ENCODE measurements at regions of chr18 and their contacts with region 1.

Region 1: GRCh38 chr18:47748847-47749599 is 181.4 kb downstream of the SMAD2 start:
- DNase-seq: peak; percentile 81
- H3K4me3 Mint-ChIP-seq: no peak overlapping the region
- H3K27ac Mint-ChIP-seq: no peak overlapping the region
- H3K4me1 Mint-ChIP-seq: peaks cover 3% of the 10 kb centered on the region
- H3K27me3 Mint-ChIP-seq: peaks cover 21% of the 10 kb centered on the region

Region 2: DNA sequence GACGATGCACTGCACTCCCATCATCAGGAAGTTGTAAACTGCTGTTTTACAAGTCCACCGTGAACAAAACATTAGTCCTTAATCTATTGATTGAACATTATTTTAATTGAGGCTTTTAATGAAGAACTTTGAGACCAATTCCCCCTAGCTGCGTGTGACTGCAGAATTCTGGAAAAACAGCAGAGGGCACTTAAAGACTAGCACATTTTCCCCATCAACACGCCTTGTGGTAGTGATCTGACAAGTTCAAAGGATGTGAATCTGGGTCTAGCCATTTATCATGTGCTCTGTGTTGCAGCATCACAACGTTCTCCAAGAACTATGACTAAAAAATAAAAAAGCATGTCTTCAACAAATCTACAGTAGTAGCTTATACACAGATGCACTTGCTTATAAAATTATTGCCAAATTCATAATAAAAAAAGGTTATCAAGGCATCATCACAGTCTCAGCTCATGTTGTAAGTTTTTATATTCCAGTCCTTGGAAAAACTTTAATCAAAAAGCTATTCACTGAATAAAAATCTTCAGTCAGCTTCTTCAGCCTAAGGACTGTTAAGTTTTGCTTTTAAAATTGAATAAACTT is 533.4 kb before region 1 on chr18:
- CTCF ChIA-PET with region 1: interaction called, 11 read pairs
- DNase-seq: peak; percentile 34
- H3K4me3 Mint-ChIP-seq: no peak overlapping the region
- H3K27ac Mint-ChIP-seq: no peak overlapping the region
- H3K4me1 Mint-ChIP-seq: no peaks in the 10 kb centered on the region
- H3K27me3 Mint-ChIP-seq: peaks cover 16% of the 10 kb centered on the region